Dorsolateral prefrontal cortex (tissue), 120 donors: ENCODE measurements at regions of chr1 and their contacts with region 1.

Region 1: GRCh38 chr1:233790662-233791375 is 113.7 kb upstream of the SLC35F3 start:
- DNase-seq: peak in 5 of 10 donors; percentile 43 to 74 (median 58)
- H3K4me3 ChIP-seq: no peak overlapping the region
- H3K27ac ChIP-seq: peak overlapping the region in 18 of 59 donors; percentile 1 to 76 (median 29)
- H3K27me3 ChIP-seq: peaks cover 0 to 4% (median 0%) of the 10 kb centered on the region in 45 donors
- CTCF ChIP-seq: peak; percentile 62 to 99 (median 93)

Region 2: GRCh38 chr1:233440951-233441401 is 349.8 kb before region 1 on chr1:
- intact Hi-C with region 1: loop called in 1 of 2 experiments (anchors 5 kb)
- DNase-seq: peak in 2 of 10 donors; percentile 21 to 55
- H3K4me3 ChIP-seq: no peak overlapping the region
- H3K27ac ChIP-seq: peak overlapping the region in 1 of 59 donors; percentile 46
- H3K27me3 ChIP-seq: peaks cover 0 to 11% (median 0%) of the 10 kb centered on the region in 45 donors
- CTCF ChIP-seq: peak; percentile 34 to 87 (median 72)

Region 3: GRCh38 chr1:233518349-233518748 is 272.5 kb before region 1 on chr1:
- intact Hi-C with region 1: loop called (anchors 5 to 10 kb)
- DNase-seq: peak in 2 of 10 donors; percentile 38 to 55
- H3K4me3 ChIP-seq: no peak overlapping the region
- H3K27ac ChIP-seq: no peak overlapping the region
- H3K27me3 ChIP-seq: no peaks in the 10 kb centered on the region
- CTCF ChIP-seq: peak; percentile 40 to 80 (median 66)

Region 4: DNA sequence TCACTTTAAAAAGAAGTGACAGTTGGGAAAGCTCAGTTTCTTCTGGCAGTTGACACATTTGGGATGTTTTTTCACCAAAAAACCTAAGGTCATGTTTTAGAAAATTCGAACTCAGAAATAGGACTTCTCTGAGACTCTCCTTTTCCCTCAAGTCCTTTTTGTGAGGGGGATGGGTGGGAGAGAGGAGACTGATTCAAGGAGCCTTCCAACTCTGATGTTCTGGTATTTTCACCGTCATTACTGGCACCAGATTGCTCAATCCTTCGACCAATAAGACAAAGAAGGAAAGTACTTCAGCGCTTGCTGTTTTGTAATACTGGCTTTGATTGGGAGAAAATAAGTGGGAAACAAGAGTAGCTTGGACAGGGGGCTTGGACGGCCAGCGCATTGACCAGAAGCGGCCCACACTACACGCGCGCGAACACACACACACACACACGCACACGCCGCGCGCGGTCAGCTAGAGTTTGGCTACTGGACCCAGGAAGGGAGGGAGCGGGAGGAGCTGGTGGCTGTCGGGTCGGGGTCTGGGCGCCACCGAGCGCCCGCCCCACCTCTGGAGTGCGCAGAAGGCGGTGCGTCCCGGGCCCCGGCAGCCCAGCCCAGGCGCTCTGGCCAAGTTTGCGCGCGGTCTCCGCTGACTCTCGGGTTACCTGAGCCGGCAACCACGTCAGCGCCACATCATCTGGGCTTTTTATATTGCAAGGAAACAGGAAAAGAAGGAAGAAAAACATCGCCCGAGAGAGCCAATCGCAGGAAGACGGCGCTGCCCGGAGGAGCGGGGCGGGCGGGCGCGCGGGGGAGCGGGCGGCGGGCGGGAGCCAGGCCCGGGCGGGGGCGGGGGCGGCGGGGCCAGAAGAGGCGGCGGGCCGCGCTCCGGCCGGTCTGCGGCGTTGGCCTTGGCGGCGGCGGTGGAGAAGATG is 177.3 kb before region 1 on chr1 and contains the start of gene KCNK1:
- intact Hi-C with region 1: loop called (anchors 5 to 10 kb)
- DNase-seq: peak; percentile 36 to 75 (median 62)
- H3K4me3 ChIP-seq: peak within 1 kb of the TSS; percentile 54 to 88 (median 76)
- H3K27ac ChIP-seq: peak within 1 kb of the TSS; percentile 11 to 92 (median 81)
- H3K27me3 ChIP-seq: peaks cover 0 to 13% (median 0%) of the 10 kb centered on the region in 45 donors
- CTCF ChIP-seq: no peak
- total RNA-seq, gene KCNK1: 32.0 to 140 (median 72.4) TPM

Region 5: DNA sequence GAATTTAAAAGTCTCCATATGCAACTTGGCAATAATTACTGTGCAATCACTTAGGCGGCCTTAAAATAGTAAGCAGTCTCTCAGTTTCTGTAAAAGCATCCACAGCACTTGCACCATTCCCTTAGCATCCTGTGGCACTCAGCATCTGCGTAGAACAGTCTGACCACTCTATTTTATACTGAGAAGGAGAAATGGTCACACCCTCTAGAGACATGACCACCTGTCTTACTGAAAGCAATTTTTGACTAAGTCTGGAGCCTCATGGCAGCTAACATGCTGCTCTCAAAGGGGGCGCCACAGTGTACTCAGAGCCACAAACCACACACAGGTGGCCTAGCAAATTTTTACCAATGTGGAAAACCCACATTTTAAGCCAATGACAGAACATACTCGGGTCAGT is 114.9 kb before region 1 on chr1:
- intact Hi-C with region 1: loop called in 1 of 2 experiments (anchors 5 kb)
- DNase-seq: no peak
- H3K4me3 ChIP-seq: no peak overlapping the region
- H3K27ac ChIP-seq: peak overlapping the region in 1 of 59 donors; percentile 50
- H3K27me3 ChIP-seq: no peaks in the 10 kb centered on the region
- CTCF ChIP-seq: no peak